ENCODE measurements at regions of chr3 and their contacts with region 1.

Region 1: DNA sequence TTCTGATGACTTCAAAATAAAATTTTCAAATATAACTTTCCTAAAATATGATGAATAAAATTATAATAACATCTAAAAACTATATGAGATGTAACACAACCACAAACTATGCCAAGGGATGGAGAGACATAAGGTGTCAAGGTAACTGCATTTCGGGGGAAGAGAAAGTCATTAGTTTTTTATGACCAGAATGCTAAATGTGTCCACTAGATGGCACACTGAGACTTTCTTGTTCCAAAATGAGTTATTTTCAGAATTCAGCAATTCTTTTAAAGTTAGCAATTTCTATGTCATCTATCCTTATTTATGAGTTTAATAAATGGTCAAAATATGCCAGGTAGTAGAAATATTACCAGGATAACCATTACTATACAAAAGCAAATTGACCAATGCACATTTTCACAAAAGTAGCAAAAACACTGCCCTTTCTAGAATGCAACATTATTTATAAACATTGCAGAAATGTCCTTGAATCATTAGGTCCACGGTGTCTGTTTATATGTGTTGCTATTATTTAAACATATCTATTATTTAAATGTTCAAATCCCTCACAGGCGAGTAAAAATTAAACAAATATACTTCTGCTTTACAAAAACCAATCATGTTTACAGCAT is 374.2 kb downstream of the PLCL2 start:
- DNase-seq: peak in 1 of 4 donors; percentile 7
- ATAC-seq: no peak
- H3K4me3 ChIP-seq: no peak overlapping the region
- H3K27ac ChIP-seq: no peak overlapping the region
- H3K4me1 ChIP-seq: peaks cover 4% of the 10 kb centered on the region
- H3K27me3 ChIP-seq: no peaks in the 10 kb centered on the region
- CTCF ChIP-seq: peak; percentile 51 to 78 (median 66)
- POLR2A ChIP-seq: no peak

Region 2: DNA sequence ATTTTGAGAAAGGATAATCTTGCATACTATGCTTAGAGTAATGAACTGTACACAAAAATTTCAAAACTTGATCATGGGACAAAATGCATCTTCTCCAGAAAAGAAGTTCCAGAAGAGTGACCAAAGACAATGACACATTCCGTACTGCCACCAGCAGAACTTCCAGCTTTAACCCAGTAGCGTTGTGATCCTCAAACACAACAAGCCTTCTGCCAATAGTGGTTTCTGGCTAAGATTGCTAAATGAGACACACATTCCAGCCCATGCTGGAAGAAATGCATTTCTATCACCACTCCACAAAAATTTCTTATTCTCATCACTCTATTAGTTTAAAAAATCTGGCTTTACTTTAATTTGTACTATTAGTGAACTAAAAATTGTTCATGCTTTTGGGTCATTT is 148.6 kb after region 1 on chr3:
- intact Hi-C with region 1: loop called (anchors 5 kb)
- DNase-seq: no peak
- ATAC-seq: no peak
- H3K4me3 ChIP-seq: no peak overlapping the region
- H3K27ac ChIP-seq: no peak overlapping the region
- H3K4me1 ChIP-seq: no peaks in the 10 kb centered on the region
- H3K27me3 ChIP-seq: no peaks in the 10 kb centered on the region
- CTCF ChIP-seq: no peak
- POLR2A ChIP-seq: no peak